Breast epithelium (tissue), 4 donors: ENCODE measurements at regions of chr2 and their contacts with region 1.

Region 1: DNA sequence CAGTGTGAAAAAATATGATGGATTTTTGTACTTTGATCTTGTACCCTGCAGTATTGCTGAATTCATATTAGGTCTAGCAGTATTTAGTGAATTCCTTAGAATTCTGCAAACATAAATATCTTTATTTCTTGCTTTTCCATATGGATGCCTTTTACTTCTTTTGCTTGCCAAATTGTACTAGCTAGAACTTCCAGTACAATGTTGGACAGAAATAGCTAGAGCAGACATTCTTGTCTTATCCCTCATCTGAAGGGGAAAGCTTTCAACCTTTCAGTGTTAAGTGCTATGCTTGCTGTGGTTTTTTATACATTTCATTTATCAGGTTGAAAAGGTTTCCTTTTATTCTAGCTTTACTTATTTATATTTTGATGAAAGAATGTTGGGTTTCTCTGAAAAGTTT is 1321.9 kb upstream of the CHAC2 start:
- DNase-seq: no peak
- H3K4me3 ChIP-seq: no peak overlapping the region
- H3K27ac ChIP-seq: no peak overlapping the region
- H3K4me1 ChIP-seq: no peaks in the 10 kb centered on the region
- H3K27me3 ChIP-seq: no peaks in the 10 kb centered on the region
- CTCF ChIP-seq: no peak
- POLR2A ChIP-seq: no peak

Region 2: GRCh38 chr2:52260904-52261303 is 184.8 kb before region 1 on chr2:
- intact Hi-C with region 1: no loop called
- DNase-seq: no peak
- H3K4me3 ChIP-seq: no peak overlapping the region
- H3K27ac ChIP-seq: no peak overlapping the region
- H3K4me1 ChIP-seq: no peaks in the 10 kb centered on the region
- H3K27me3 ChIP-seq: no peaks in the 10 kb centered on the region
- CTCF ChIP-seq: no peak
- POLR2A ChIP-seq: no peak

Region 3: DNA sequence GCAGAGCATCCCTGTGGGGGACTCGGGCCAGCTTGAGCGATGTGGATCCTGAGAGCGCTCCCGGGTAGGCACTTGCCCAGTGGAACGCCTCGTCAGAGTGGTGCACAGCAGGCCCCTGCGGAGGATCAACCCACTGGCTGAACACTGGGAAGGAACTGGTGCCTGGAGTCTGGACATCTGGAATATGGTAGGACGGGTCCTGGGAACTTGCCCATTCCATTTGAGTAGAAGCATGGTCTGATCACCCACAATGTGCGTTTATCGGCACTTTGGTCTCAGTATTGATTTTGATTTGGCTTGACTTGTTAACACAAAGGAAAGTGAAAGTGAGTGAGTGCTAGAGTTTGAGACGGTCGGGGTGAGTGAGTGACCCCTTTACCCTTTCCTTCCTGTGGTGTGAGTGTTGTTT is 14.3 kb before region 1 on chr2:
- intact Hi-C with region 1: loop called (anchors 1 kb)
- DNase-seq: no peak
- H3K4me3 ChIP-seq: no peak overlapping the region
- H3K27ac ChIP-seq: no peak overlapping the region
- H3K4me1 ChIP-seq: no peaks in the 10 kb centered on the region
- H3K27me3 ChIP-seq: no peaks in the 10 kb centered on the region
- CTCF ChIP-seq: no peak
- POLR2A ChIP-seq: no peak